Mammary epithelial cell (primary cell): ENCODE measurements at regions of chr2 and their contacts with region 1.

Region 1: GRCh38 chr2:137886083-137886831 is 78.0 kb upstream of the HNMT start:
- DNase-seq: peak; percentile 35
- H3K4me3 ChIP-seq: no peak overlapping the region
- H3K27ac ChIP-seq: no peak overlapping the region
- H3K4me1 ChIP-seq: no peaks in the 10 kb centered on the region
- H3K27me3 ChIP-seq: no peaks in the 10 kb centered on the region
- CTCF ChIP-seq: peak in 1 of 2 donors; percentile 27

Region 2: GRCh38 chr2:137865954-137866540 is 20.2 kb before region 1 on chr2:
- CTCF ChIA-PET with region 1: interaction called, 3 read pairs
- dilution Hi-C with region 1: no loop called
- in situ Hi-C with region 1: no loop called
- intact Hi-C with region 1: loop called (anchors 1 kb)
- DNase-seq: peak; percentile 24
- H3K4me3 ChIP-seq: no peak overlapping the region
- H3K27ac ChIP-seq: no peak overlapping the region
- H3K4me1 ChIP-seq: no peaks in the 10 kb centered on the region
- H3K27me3 ChIP-seq: peaks cover 2% of the 10 kb centered on the region
- CTCF ChIP-seq: peak; percentile 73 to 81